Stomach (tissue), 19 donors: ENCODE measurements at regions of chr5 and their contacts with region 1.

Region 1: GRCh38 chr5:171907725-171908343 is 98.6 kb downstream of the FBXW11 start:
- DNase-seq: peak; percentile 34 to 87
- H3K4me3 ChIP-seq: no peak overlapping the region
- H3K27ac ChIP-seq: peak overlapping the region in 1 of 5 donors; percentile 22
- H3K4me1 ChIP-seq: peaks cover 10 to 69% (median 46%) of the 10 kb centered on the region in 4 donors
- H3K27me3 ChIP-seq: no peaks in the 10 kb centered on the region
- CTCF ChIP-seq: peak in 5 of 7 experiments; percentile 32 to 80 (median 66)
- EP300 ChIP-seq: no peak
- POLR2A ChIP-seq: no peak

Region 2: DNA sequence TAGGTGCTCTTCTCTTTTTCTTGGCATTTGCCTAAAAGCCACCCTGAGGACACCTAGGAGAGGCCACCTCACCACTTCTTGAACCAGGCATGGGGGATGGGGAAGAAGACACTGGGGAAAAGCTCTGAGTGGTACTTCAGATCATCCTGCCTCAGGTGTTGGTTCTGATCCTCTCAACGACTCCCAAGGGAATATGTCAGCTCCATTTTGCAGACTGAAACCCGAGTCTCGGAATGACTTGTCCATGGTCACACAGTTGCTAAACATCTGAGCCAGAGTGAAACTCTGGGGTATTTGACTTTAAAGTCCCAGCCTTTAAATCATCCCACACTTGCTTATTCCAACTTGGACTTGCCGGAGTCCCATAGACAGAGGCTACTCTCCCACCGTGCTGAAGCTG is 1244.9 kb before region 1 on chr5:
- intact Hi-C with region 1: no loop called
- DNase-seq: no peak
- H3K4me3 ChIP-seq: no peak overlapping the region
- H3K27ac ChIP-seq: no peak overlapping the region
- H3K4me1 ChIP-seq: no peaks in the 10 kb centered on the region
- H3K27me3 ChIP-seq: peaks cover 0 to 7% (median 0%) of the 10 kb centered on the region in 3 donors
- CTCF ChIP-seq: no peak
- EP300 ChIP-seq: no peak
- POLR2A ChIP-seq: no peak

Region 3: GRCh38 chr5:171419688-171420430 is 488.0 kb before region 1 on chr5:
- intact Hi-C with region 1: loop called (anchors 10 kb)
- DNase-seq: peak; percentile 32 to 77
- H3K4me3 ChIP-seq: peak overlapping the region; percentile 43 to 55 (median 50)
- H3K27ac ChIP-seq: peak overlapping the region in 2 of 5 donors; percentile 50 to 68
- H3K4me1 ChIP-seq: peaks cover 31 to 39% (median 32%) of the 10 kb centered on the region in 4 donors
- H3K27me3 ChIP-seq: peaks cover 0 to 33% (median 27%) of the 10 kb centered on the region in 3 donors
- CTCF ChIP-seq: no peak
- EP300 ChIP-seq: no peak
- POLR2A ChIP-seq: no peak

Region 4: GRCh38 chr5:172038167-172038566 is 130.3 kb after region 1 on chr5:
- intact Hi-C with region 1: loop called (anchors 2 kb)
- DNase-seq: no peak
- H3K4me3 ChIP-seq: no peak overlapping the region
- H3K27ac ChIP-seq: no peak overlapping the region
- H3K4me1 ChIP-seq: peaks cover 0 to 6% (median 2%) of the 10 kb centered on the region in 4 donors
- H3K27me3 ChIP-seq: no peaks in the 10 kb centered on the region
- CTCF ChIP-seq: no peak
- EP300 ChIP-seq: no peak
- POLR2A ChIP-seq: no peak